HCT116 (cell line): ENCODE measurements at regions of chr6 and their contacts with region 1.

Region 1: GRCh38 chr6:157667211-157668008 is 155.6 kb upstream of the SNX9 start:
- DNase-seq: peak; percentile 53
- ATAC-seq: peak; percentile 87
- H3K4me3 ChIP-seq: no peak overlapping the region
- H3K27ac ChIP-seq: no peak overlapping the region
- H3K4me1 ChIP-seq: no peaks in the 10 kb centered on the region; a peak in 1 of 4 replicates
- H3K27me3 ChIP-seq: no peaks in the 10 kb centered on the region
- CTCF ChIP-seq: peak; percentile 85 to 95 (median 93)
- POLR2A ChIP-seq: no peak
- RAD21 ChIP-seq: peak; percentile 90

Region 2: DNA sequence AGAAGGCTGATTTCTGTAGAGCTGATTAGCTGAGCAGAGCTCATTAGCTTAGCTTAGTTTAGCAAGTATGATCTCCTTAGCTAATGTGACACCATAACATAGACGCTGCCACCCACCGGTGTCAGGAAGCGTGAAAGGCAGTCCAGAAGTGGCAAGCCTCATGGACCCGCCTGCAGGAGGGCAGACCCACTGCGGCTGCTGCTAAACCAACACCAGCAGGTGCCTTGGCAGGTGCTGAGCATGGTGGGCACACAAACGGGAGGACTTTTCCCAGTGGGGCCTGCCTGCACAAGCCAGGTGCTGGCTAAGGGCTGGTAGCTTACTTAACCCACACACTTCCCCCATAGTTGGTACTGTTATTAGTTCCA is 263.7 kb before region 1 on chr6:
- CTCF ChIA-PET with region 1: no interaction called
- POLR2A ChIA-PET with region 1: no interaction called
- RAD21 ChIA-PET with region 1: no interaction called
- intact Hi-C with region 1: no loop called
- DNase-seq: no peak
- ATAC-seq: no peak
- H3K4me3 ChIP-seq: no peak overlapping the region
- H3K27ac ChIP-seq: no peak overlapping the region
- H3K4me1 ChIP-seq: peaks cover 0 to 4% of the 10 kb centered on the region in 2 experiments; a peak in 1 of 4 replicates
- H3K27me3 ChIP-seq: no peaks in the 10 kb centered on the region
- CTCF ChIP-seq: no peak
- POLR2A ChIP-seq: no peak
- RAD21 ChIP-seq: no peak

Region 3: DNA sequence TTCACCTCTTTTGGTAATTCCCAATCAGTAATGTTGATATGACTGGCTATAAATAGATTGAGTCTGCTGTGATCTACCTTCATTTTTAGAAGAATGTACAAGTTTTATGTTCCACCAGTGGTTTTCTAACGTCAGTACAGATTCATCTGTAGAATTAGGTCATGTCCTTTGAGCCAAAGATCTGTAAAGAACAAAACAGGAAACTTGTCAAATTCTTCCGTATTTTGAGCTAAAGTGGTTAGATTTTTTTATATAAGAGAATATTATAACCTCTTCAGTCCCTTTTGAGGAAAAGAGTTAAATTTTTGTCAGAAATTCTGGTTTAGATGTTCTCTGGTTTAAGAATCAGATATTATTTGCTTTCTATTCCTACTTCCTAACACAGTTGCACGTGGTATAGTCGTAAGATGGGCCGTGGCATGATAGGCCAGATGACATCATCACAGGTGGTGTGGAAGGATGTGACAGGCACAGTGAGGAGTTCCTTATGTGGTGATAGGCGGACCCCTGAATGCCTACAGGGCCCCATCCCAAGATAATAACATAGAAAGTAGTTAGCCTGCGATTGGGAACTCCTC is 217.9 kb after region 1 on chr6:
- CTCF ChIA-PET with region 1: no interaction called
- POLR2A ChIA-PET with region 1: no interaction called
- RAD21 ChIA-PET with region 1: no interaction called
- intact Hi-C with region 1: no loop called
- DNase-seq: no peak
- ATAC-seq: no peak
- H3K4me3 ChIP-seq: no peak overlapping the region
- H3K27ac ChIP-seq: no peak overlapping the region
- H3K4me1 ChIP-seq: no peaks in the 10 kb centered on the region
- H3K27me3 ChIP-seq: no peaks in the 10 kb centered on the region
- CTCF ChIP-seq: no peak
- POLR2A ChIP-seq: no peak
- RAD21 ChIP-seq: no peak

Region 4: GRCh38 chr6:157954150-157955117 is 287.0 kb after region 1 on chr6:
- CTCF ChIA-PET with region 1: no interaction called
- POLR2A ChIA-PET with region 1: no interaction called
- RAD21 ChIA-PET with region 1: no interaction called
- intact Hi-C with region 1: loop called (anchors 10 kb)
- DNase-seq: no peak
- ATAC-seq: peak; percentile 85
- H3K4me3 ChIP-seq: peak overlapping the region; percentile 17 to 42
- H3K27ac ChIP-seq: no peak overlapping the region
- H3K4me1 ChIP-seq: peaks cover 12 to 30% of the 10 kb centered on the region in 2 experiments; a peak in 3 of 4 replicates
- H3K27me3 ChIP-seq: no peaks in the 10 kb centered on the region
- CTCF ChIP-seq: peak in 2 of 3 experiments; percentile 22 to 48; a peak in 1 of 6 replicates
- POLR2A ChIP-seq: no peak
- RAD21 ChIP-seq: peak; percentile 73